OCI-LY7 (cell line): ENCODE measurements at regions of chr3 and their contacts with region 1.

Region 1: GRCh38 chr3:85979034-85979433 is 1011.9 kb downstream of the VGLL3 start:
- DNase-seq: no peak
- H3K4me3 ChIP-seq: no peak overlapping the region
- H3K27ac ChIP-seq: no peak overlapping the region
- H3K4me1 ChIP-seq: no peaks in the 10 kb centered on the region
- CTCF ChIP-seq: no peak

Region 2: DNA sequence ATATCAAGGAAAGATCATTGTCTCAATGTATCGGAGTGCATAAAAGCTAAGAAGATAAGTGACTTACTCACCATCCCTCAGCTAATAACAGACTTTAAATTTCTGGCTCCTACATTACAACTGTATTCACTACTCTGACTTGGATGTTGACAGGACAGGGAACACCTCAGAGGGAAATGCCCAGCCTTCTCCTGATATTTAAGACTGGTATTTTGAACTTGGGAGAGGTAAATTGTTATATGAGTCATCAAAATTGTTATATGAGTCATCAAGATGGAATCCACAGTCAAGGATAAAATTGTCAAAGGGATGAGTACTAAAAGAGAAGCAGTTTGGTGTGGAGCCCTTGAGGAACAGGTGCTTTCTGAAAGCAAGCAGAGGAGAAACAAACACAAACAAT is 50.6 kb after region 1 on chr3:
- CTCF ChIA-PET with region 1: no interaction called
- POLR2A ChIA-PET with region 1: no interaction called
- intact Hi-C with region 1: loop called (anchors 5 kb)
- DNase-seq: no peak
- H3K4me3 ChIP-seq: no peak overlapping the region
- H3K27ac ChIP-seq: no peak overlapping the region
- H3K4me1 ChIP-seq: no peaks in the 10 kb centered on the region
- CTCF ChIP-seq: no peak